ENCODE measurements at regions of chr2 and their contacts with region 1.

Region 1: GRCh38 chr2:105545730-105546627 is 147.1 kb upstream of the FHL2 start:
- DNase-seq: peak; percentile 70 to 80
- H3K4me3 ChIP-seq: no peak overlapping the region
- H3K4me3 Mint-ChIP-seq: no peak overlapping the region
- H3K27ac Mint-ChIP-seq: no peak overlapping the region
- H3K4me1 ChIP-seq: peaks cover 3% of the 10 kb centered on the region; the same call in 1 of the 2 replicates
- H3K4me1 Mint-ChIP-seq: peaks cover 9% of the 10 kb centered on the region
- H3K27me3 ChIP-seq: no peaks in the 10 kb centered on the region
- H3K27me3 Mint-ChIP-seq: no peaks in the 10 kb centered on the region
- CTCF ChIP-seq: peak; percentile 75 to 93

Region 2: DNA sequence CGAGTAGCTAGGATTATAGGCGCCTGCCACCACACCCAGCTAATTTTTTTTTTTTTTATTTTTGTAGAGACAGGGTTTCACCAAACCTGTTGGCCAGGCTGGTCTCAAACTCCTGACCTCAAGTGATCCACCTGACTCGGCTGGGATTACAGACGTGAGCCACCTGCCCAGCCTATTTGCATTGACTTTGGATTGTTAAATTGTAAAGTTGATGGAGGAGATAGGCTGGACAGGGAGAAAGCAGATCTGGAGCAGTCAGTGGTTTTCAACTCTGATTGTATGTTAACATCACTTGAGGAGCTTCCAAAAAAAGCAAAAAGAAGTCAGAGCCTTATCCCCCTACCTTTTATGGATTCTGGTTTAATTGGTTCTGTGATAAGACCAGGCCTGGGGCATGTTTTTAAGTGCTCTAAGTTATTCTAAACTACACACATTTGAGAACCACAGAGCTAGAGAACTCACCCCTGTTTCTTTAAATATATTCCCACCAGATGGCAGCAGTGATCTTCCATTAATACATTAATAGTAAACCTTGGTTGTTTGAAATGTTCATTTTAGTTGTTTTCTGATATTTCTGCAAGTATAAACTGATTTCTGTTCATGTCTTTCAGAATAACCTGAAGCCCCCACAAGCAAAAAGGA is 201.2 kb before region 1 on chr2:
- CTCF ChIA-PET with region 1: no interaction called
- POLR2A ChIA-PET with region 1: no interaction called
- intact Hi-C with region 1: loop called (anchors 1 kb)
- DNase-seq: peak in 1 of 2 experiments; percentile 50
- H3K4me3 ChIP-seq: no peak overlapping the region
- H3K4me3 Mint-ChIP-seq: no peak overlapping the region
- H3K27ac Mint-ChIP-seq: no peak overlapping the region
- H3K4me1 ChIP-seq: no peaks in the 10 kb centered on the region
- H3K4me1 Mint-ChIP-seq: peaks cover 5% of the 10 kb centered on the region
- H3K27me3 ChIP-seq: no peaks in the 10 kb centered on the region
- H3K27me3 Mint-ChIP-seq: no peaks in the 10 kb centered on the region
- CTCF ChIP-seq: peak; percentile 20 to 40

Region 3: GRCh38 chr2:105369747-105370690 is 176.0 kb before region 1 on chr2:
- CTCF ChIA-PET with region 1: no interaction called
- POLR2A ChIA-PET with region 1: no interaction called
- intact Hi-C with region 1: loop called (anchors 1 kb)
- DNase-seq: peak; percentile 74 to 77
- H3K4me3 ChIP-seq: no peak overlapping the region
- H3K4me3 Mint-ChIP-seq: no peak overlapping the region
- H3K27ac Mint-ChIP-seq: peak overlapping the region; percentile 47
- H3K4me1 ChIP-seq: peaks cover 3% of the 10 kb centered on the region; the same call in 1 of the 2 replicates
- H3K4me1 Mint-ChIP-seq: peaks cover 12% of the 10 kb centered on the region
- H3K27me3 ChIP-seq: no peaks in the 10 kb centered on the region
- H3K27me3 Mint-ChIP-seq: no peaks in the 10 kb centered on the region
- CTCF ChIP-seq: peak; percentile 72 to 75

Measured in Caco-2 (cell line).